AG04449 (cell line): ENCODE measurements at regions of chr2 and their contacts with region 1.

Region 1: DNA sequence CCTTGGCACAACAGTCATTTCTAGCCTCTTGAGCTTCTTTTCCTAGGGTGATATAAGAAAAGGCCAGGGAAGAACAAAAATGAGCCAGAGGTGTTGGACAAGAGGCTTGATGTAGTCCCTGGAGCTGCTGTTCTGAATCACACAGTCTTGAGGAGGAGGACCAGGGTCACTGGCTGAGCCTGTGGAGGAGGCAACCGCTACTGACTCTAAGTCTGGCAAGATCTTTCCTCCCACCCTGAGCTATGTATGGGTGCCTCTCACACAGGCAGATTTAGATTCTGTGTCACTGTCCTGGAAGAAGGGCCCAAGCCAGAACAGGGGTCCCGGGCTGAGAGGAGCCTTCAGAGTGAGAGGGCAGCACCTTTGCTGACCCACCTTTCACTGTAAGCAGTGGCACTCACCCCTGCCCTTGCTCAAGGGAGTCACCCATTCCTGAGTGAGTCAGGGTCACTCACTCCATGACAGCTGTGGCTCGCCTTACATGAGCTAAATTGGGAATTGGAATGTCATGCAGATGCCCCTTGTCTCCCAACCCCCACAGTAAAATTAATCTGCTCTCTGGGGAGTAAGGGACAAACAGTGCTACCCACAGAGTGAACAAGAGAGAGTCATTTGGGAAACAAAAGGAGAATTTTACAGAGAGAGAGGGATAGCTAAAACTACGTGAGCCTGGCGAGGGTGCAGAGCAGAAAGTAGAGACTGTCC is at the start of gene TRIM54:
- DNase-seq: no peak
- H3K4me3 ChIP-seq: no peak within 1 kb of the TSS
- CTCF ChIP-seq: no peak

Region 2: DNA sequence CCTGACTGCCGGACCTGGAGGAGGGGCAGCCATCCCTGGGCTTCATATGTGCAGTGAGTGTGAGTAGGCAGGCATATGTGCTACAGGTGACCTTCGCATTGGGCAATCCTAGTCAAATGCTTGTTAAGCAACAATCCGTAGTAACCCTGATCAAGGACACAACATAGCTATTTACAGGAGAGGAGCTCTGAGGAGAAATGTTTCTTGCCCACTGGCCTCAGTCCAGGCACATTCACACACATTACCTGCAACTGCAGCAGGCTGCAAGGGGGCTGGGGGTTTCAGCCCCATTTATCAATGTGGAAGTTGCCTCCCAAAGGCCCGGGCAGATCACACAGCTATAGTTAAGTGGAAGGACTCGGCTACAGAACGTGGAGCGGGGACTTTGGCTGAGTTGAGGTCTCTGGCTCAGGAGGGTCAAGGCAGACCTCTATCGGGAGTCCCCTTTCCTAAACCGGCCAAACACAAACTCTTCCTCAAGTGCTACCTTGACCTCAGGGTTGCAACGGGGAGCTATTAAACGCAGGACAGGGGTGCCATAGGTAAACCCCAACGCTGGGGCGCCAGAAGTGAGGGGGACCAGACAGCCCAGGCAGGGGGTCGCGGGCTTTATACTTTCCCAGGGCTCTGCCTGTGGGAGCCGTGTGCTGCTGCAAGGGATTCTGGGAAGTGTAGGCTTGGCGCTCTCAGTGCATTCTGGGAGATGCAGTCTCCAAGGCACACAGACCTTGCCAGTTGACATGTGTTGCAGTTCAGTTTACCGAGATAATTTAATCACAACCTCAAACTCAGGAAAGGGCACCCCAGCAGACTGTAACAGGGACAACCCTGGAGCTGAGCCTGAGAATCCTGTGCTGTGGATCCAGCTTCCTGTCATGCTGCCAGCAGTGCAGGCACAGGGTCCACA is 186.0 kb before region 1 on chr2:
- CTCF ChIA-PET with region 1: interaction called, 206 read pairs
- POLR2A ChIA-PET with region 1: no interaction called
- DNase-seq: no peak
- H3K4me3 ChIP-seq: peak overlapping the region; percentile 23
- CTCF ChIP-seq: no peak

Region 3: DNA sequence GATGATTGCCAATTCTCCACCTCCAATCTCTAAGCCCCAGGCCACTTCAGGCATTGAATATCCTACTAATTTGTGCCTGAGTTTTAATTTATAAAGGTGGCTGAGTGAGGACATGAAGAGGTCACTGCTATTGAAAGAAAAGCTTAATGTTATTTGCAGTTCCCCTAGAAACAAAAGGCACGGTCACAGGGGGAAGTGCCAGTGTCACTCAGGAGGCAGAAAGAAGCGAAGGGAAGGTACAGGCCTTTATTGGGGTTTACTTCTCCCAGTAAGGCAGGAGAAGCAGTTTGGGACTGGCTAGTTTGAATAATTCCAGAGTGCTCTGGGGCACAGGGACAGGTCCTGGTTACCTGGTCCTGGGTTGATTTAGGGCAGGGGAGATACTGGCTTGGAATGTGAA is 160.1 kb before region 1 on chr2:
- CTCF ChIA-PET with region 1: no interaction called
- POLR2A ChIA-PET with region 1: no interaction called
- DNase-seq: no peak
- H3K4me3 ChIP-seq: no peak overlapping the region
- CTCF ChIP-seq: no peak

Region 4: GRCh38 chr2:27170581-27171333 is 111.2 kb before region 1 on chr2:
- CTCF ChIA-PET with region 1: interaction called, 18 read pairs
- POLR2A ChIA-PET with region 1: no interaction called
- DNase-seq: no peak
- H3K4me3 ChIP-seq: no peak overlapping the region
- CTCF ChIP-seq: no peak

Region 5: DNA sequence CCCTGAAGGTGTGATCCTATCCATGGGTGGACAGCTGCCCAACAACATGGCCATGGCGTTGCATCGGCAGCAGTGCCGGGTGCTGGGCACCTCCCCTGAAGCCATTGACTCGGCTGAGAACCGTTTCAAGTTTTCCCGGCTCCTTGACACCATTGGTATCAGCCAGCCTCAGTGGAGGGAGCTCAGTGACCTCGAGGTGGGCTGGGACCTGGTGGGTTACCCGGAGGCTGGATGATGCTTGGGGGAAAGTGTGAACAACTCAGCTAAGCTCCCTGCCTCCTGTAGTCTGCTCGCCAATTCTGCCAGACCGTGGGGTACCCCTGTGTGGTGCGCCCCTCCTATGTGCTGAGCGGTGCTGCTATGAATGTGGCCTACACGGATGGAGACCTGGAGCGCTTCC is 48.7 kb before region 1 on chr2:
- CTCF ChIA-PET with region 1: interaction called, 13 read pairs
- POLR2A ChIA-PET with region 1: no interaction called
- DNase-seq: no peak
- H3K4me3 ChIP-seq: no peak overlapping the region
- CTCF ChIP-seq: no peak

Region 6: DNA sequence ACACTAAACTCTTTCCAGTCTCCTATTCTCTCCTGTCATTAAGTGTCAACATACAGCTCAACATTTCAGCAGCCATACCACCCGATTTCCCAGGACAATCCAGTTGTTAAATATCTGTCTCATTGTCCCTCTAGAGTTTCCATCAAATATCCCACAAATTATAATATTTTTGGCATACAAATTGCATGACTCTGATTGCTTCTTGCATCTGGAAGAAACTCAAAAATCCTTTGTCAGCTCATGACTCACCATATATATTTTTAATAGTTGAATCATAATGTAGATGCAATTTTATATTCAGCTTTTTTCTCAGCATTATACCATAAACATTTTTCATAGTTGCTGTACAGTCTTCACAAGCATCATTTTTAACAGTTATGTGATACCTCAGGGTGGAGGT is 26.3 kb before region 1 on chr2:
- CTCF ChIA-PET with region 1: interaction called, 48 read pairs
- POLR2A ChIA-PET with region 1: no interaction called
- DNase-seq: no peak
- H3K4me3 ChIP-seq: no peak overlapping the region
- CTCF ChIP-seq: no peak

Region 7: GRCh38 chr2:27271631-27272340 is 10.2 kb before region 1 on chr2:
- CTCF ChIA-PET with region 1: interaction called, 125 read pairs
- POLR2A ChIA-PET with region 1: no interaction called
- DNase-seq: no peak
- H3K4me3 ChIP-seq: no peak overlapping the region
- CTCF ChIP-seq: no peak

Region 8: DNA sequence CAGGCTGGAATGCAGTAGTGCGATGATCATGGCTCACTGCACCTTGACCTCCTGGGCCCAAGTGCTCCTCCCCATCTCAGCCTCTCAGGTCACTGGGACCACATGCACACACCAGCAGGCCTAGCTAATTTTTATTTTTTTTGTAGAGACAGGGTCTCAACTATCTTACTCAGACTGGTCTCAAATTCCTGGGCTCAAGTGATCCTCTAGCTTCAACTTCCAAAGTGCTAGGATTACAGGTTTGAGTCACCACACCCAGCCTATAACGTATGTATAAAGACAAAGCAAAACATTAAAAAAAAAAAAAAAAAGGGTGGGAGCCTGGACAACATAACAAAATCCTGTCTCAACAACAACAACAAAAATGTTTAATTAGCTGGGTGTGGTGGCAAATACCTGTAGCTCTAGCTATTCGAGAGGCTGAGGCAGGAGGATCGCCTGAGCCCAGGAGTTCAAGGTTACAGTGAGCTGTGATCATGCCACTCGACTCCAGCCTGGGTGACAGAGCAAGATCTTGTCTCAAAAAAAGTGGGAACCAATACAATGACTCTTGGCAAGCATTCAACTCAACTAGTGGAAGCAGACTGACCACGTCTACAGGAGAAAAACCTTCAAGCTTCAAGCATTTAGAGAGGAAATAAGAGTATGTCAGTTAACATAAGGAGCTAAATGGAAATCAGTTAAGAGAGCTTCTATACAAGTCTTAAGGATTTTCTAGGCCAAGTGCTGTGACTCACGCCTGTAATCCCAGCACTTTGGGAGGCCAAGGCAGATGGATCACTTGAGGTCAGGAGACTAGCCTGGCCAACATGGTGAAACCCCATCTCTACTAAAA is 72.0 kb after region 1 on chr2:
- CTCF ChIA-PET with region 1: no interaction called
- POLR2A ChIA-PET with region 1: no interaction called
- DNase-seq: no peak
- H3K4me3 ChIP-seq: no peak overlapping the region
- CTCF ChIP-seq: no peak

Region 9: DNA sequence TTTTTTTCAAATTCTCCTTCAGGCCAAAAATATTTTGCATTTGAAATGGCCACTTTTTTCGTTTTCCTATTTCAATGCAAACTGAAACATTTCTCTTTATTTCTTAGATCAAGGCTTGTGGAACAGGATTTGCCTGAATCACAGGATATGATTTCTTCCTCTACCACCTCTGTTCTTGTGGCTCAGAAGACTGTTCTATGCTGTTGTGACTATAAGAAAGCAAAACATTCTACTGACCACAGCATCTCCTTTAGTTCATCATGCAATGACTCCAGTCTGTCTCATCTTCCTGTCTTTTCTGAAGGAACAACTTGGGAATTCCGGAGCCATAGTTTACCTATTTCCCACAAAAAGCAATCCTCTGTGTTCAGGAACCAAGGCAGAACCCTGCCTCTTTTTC is 284.6 kb after region 1 on chr2:
- CTCF ChIA-PET with region 1: no interaction called
- POLR2A ChIA-PET with region 1: no interaction called
- DNase-seq: peak; percentile 50
- H3K4me3 ChIP-seq: no peak overlapping the region
- CTCF ChIP-seq: no peak